ENCODE measurements at regions of chr11 and their contacts with region 1.

Region 1: DNA sequence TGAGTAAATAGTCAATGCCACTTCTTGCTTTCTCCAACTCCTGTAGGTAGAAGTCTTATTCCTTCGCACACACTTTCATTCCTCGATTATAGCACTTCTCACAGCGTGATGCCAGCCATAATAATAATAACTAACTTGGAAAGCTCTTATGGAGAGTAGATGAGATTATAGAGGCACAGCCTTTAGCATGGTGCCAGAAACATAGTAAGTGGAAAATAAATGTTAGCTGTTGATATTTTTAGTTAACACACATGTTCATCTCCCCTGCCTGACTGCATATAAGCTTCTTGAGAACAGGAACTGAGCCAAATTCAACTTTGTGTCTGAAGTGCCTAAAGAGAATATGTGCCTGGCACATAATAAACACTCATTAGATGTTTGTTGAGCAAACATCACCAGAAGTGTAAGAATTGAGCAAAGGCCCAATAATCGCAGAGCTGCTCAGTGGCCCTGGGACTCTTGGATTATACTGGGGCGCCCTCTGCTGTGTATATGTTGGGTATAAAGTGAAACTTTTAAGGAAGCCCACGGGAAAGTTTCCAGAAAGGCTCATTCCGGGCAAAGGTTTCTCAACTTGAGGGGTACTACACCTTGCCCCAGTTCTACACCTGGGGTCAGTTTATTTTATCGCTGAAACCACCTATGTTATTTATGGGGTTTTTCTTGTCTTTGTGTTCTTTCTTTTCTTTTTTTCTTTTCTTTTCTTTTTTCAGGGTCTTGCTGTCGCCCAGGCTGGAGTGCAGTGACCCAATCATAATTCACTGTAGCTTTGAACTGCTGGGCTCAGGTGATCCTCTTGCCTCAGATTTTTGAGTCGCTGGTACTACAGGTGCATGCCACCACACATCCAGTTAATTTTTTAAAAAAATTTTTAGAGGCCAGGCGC is 22.3 kb downstream of the SLN start:
- DNase-seq: peak; percentile 62
- H3K4me3 Mint-ChIP-seq: no peak overlapping the region
- H3K27ac Mint-ChIP-seq: no peak overlapping the region
- H3K4me1 Mint-ChIP-seq: no peaks in the 10 kb centered on the region
- H3K27me3 Mint-ChIP-seq: no peaks in the 10 kb centered on the region
- CTCF ChIP-seq: no peak

Region 2: GRCh38 chr11:107549253-107549953 is 140.2 kb before region 1 on chr11:
- CTCF ChIA-PET with region 1: interaction called, 7 read pairs
- intact Hi-C with region 1: loop called (anchors 1 kb)
- DNase-seq: no peak
- H3K4me3 Mint-ChIP-seq: no peak overlapping the region
- H3K27ac Mint-ChIP-seq: no peak overlapping the region
- H3K4me1 Mint-ChIP-seq: peaks cover 26% of the 10 kb centered on the region
- H3K27me3 Mint-ChIP-seq: no peaks in the 10 kb centered on the region
- CTCF ChIP-seq: no peak

Region 3: DNA sequence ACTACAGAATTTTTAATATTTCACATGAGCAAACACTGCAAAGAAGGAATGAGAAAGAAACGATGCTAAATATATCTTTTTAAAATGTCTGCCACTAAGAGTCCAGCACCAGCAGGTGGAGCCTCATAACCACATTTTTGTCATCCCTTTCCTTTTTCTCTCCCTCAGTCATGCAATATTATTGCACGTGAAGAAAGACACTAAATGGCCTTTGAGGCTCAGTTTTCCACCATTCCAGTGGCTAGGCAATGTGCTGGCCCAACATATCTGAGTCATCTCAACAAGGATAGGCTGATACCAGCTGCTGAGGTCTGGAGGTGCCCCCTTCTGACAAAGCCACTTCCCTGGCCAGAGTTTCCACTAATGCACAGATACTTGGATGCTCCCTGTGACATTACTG is 125.9 kb before region 1 on chr11:
- CTCF ChIA-PET with region 1: interaction called, 9 read pairs
- intact Hi-C with region 1: loop called (anchors 1 kb)
- DNase-seq: peak; percentile 28
- H3K4me3 Mint-ChIP-seq: no peak overlapping the region
- H3K27ac Mint-ChIP-seq: no peak overlapping the region
- H3K4me1 Mint-ChIP-seq: peaks cover 29% of the 10 kb centered on the region
- H3K27me3 Mint-ChIP-seq: no peaks in the 10 kb centered on the region
- CTCF ChIP-seq: peak; percentile 43

Region 4: DNA sequence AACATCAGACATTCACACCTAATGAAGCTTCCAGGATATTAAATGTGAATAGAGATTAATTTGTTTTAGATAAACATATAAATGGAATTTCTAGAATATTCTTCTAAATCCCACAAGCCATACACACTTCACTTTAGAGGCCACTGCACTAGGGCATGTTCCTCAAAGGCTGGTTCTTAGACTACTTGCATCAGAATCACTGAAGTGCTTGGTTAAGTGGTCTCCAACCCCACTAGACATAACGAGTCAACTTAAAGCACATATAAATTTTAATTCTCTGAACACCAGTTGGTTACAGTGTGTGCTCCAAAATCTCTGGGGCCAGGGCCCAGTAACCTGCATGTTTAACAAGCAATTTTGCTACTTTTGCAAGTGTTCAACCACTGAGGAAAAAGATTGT is 116.1 kb before region 1 on chr11:
- CTCF ChIA-PET with region 1: no interaction called
- intact Hi-C with region 1: loop called (anchors 1 kb)
- DNase-seq: no peak
- H3K4me3 Mint-ChIP-seq: no peak overlapping the region
- H3K27ac Mint-ChIP-seq: no peak overlapping the region
- H3K4me1 Mint-ChIP-seq: no peaks in the 10 kb centered on the region
- H3K27me3 Mint-ChIP-seq: no peaks in the 10 kb centered on the region
- CTCF ChIP-seq: no peak

Region 5: GRCh38 chr11:107660066-107660465 is 29.5 kb before region 1 on chr11:
- CTCF ChIA-PET with region 1: no interaction called
- intact Hi-C with region 1: loop called (anchors 1 kb)
- DNase-seq: no peak
- H3K4me3 Mint-ChIP-seq: no peak overlapping the region
- H3K27ac Mint-ChIP-seq: no peak overlapping the region
- H3K4me1 Mint-ChIP-seq: no peaks in the 10 kb centered on the region
- H3K27me3 Mint-ChIP-seq: peaks cover 13% of the 10 kb centered on the region
- CTCF ChIP-seq: no peak

Region 6: GRCh38 chr11:107799218-107799859 is 109.8 kb after region 1 on chr11:
- CTCF ChIA-PET with region 1: no interaction called
- intact Hi-C with region 1: no loop called
- DNase-seq: peak; percentile 68
- H3K4me3 Mint-ChIP-seq: no peak overlapping the region
- H3K27ac Mint-ChIP-seq: no peak overlapping the region
- H3K4me1 Mint-ChIP-seq: no peaks in the 10 kb centered on the region
- H3K27me3 Mint-ChIP-seq: no peaks in the 10 kb centered on the region
- CTCF ChIP-seq: peak; percentile 68

Region 7: DNA sequence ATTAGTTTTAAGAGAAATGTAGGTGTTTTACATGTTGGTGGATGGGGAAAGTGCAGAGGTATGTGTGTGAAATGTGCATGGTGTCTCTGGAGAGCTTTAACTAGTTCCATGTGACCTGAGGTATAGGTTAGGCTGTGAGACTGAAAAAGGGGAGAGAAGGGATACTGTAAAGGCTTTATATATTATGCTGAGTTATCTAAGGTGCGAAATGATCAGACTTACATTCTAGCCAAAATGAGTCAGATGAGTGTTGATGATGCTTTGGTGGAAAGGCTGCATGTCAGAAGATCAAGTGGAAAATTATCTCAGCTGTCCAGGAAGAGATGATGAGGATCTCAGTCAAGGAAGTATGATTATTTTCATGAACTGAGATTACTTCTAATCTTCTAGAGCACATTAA is 447.7 kb after region 1 on chr11:
- CTCF ChIA-PET with region 1: no interaction called
- intact Hi-C with region 1: no loop called
- DNase-seq: no peak
- H3K4me3 Mint-ChIP-seq: no peak overlapping the region
- H3K27ac Mint-ChIP-seq: no peak overlapping the region
- H3K4me1 Mint-ChIP-seq: no peaks in the 10 kb centered on the region
- H3K27me3 Mint-ChIP-seq: no peaks in the 10 kb centered on the region
- CTCF ChIP-seq: no peak

Measured in Calu3 (cell line).